ENCODE measurements at regions of chr11 and their contacts with region 1.

Region 1: GRCh38 chr11:65711785-65712632 is at the start of gene KAT5:
- DNase-seq: peak; percentile 94
- ATAC-seq: peak; percentile 89
- H3K4me3 ChIP-seq: peak within 1 kb of the TSS; percentile 85
- H3K27ac ChIP-seq: peak within 1 kb of the TSS; percentile 99
- H3K4me1 ChIP-seq: peaks cover 8% of the 10 kb centered on the region
- H3K27me3 ChIP-seq: no peaks in the 10 kb centered on the region
- CTCF ChIP-seq: peak; percentile 99 to 100 (median 100); a peak in 5 of 6 replicates
- EP300 ChIP-seq: peak in 1 of 2 experiments; percentile 16; a peak in 1 of 4 replicates
- POLR2A ChIP-seq: peak; percentile 92
- RAD21 ChIP-seq: peak; percentile 90
- polyA plus RNA-seq, gene KAT5: 3.4 to 10.2 TPM

Region 2: GRCh38 chr11:65625628-65626342 is 86.2 kb before region 1 on chr11:
- CTCF ChIA-PET with region 1: interaction called, 26 read pairs
- POLR2A ChIA-PET with region 1: no interaction called
- RAD21 ChIA-PET with region 1: interaction called, 7 read pairs
- SMC1A ChIA-PET with region 1: interaction called, 5 read pairs
- in situ Hi-C with region 1: no loop called
- intact Hi-C with region 1: loop called (anchors 5 kb)
- DNase-seq: no peak
- ATAC-seq: peak; percentile 96
- H3K4me3 ChIP-seq: no peak overlapping the region
- H3K27ac ChIP-seq: no peak overlapping the region
- H3K4me1 ChIP-seq: no peaks in the 10 kb centered on the region
- H3K27me3 ChIP-seq: no peaks in the 10 kb centered on the region
- CTCF ChIP-seq: peak; percentile 60 to 87 (median 85)
- EP300 ChIP-seq: no peak
- POLR2A ChIP-seq: no peak
- RAD21 ChIP-seq: peak; percentile 39

Region 3: DNA sequence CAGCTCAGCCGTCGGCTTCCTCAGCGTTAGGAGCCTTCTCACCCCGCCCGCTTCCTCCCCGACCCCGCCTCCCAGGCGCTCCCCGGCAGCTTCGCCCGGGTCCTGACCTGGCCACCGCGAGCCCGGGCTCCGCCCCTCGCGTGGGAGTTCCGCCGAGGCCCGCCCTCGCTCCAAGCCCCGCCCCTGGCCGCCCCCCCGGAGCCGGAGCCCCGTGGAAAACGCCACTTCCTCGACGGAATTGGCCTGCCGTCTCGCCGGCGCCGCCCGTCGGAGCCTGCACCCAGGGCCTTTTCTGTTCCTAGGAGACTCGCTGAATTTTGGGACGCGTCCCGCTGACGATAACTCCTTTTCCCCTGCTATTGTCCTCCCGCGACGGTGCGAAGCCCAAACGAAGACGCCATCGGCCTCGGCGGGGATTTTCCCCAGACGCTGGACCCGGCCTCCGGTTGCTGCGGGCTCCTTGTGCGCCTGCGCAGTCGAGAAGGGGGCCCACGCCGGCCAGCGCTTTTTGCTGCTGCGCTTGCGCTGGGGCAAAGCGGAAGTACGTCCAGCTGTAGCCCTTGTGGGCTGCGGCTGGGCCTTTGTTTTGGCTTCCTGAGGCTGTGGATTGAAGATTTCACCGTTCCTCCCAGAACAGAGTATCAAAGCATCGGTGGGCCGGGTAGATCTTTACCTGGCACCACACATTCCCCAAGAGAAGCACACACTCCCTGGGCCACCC is 59.3 kb before region 1 on chr11:
- CTCF ChIA-PET with region 1: no interaction called
- POLR2A ChIA-PET with region 1: no interaction called
- RAD21 ChIA-PET with region 1: no interaction called
- SMC1A ChIA-PET with region 1: no interaction called
- in situ Hi-C with region 1: no loop called
- intact Hi-C with region 1: no loop called
- DNase-seq: peak; percentile 80
- ATAC-seq: peak; percentile 90
- H3K4me3 ChIP-seq: peak overlapping the region; percentile 51; the same call in 1 of the 2 replicates
- H3K27ac ChIP-seq: peak overlapping the region; percentile 90
- H3K4me1 ChIP-seq: peaks cover 16% of the 10 kb centered on the region
- H3K27me3 ChIP-seq: no peaks in the 10 kb centered on the region
- CTCF ChIP-seq: 0 out of 6 replicates have a peak, but pooled peaks of 1 of the 3 experiments have one; percentile 11
- EP300 ChIP-seq: no peak
- POLR2A ChIP-seq: peak; percentile 88
- RAD21 ChIP-seq: no peak

Region 4: DNA sequence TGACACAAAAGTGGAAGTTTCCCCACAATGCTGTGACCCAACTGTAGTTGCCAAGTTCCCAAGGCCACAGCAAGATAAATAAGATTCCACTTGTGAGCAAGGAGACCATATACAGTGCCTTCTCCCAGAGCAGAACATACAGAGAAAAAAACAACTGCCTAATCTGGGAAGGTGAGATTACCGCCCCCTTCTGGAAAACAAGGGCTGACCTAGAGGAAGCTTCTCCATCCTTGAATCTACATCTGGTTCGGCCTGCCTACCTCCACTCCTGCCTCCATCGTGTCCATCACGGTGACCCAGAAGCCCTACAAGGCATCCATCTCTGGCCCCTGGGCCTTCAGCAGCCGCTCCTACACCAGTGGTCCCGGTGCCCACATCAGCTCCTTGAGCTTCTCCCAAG is 14.7 kb after region 1 on chr11:
- CTCF ChIA-PET with region 1: interaction called, 16 read pairs
- POLR2A ChIA-PET with region 1: interaction called, 13 read pairs
- RAD21 ChIA-PET with region 1: interaction called, 12 read pairs
- SMC1A ChIA-PET with region 1: interaction called, 5 read pairs
- in situ Hi-C with region 1: no loop called
- intact Hi-C with region 1: no loop called
- DNase-seq: no peak
- ATAC-seq: peak; percentile 26; the same call in 1 of the 3 replicates
- H3K4me3 ChIP-seq: no peak overlapping the region
- H3K27ac ChIP-seq: no peak overlapping the region
- H3K4me1 ChIP-seq: no peaks in the 10 kb centered on the region
- H3K27me3 ChIP-seq: no peaks in the 10 kb centered on the region; a peak in 1 of 4 replicates
- CTCF ChIP-seq: peak; percentile 7 to 25 (median 21); a peak in 2 of 6 replicates
- EP300 ChIP-seq: no peak
- POLR2A ChIP-seq: no peak
- RAD21 ChIP-seq: no peak

Region 5: GRCh38 chr11:65817835-65818742 is 106.1 kb after region 1 on chr11:
- CTCF ChIA-PET with region 1: interaction called, 41 read pairs
- POLR2A ChIA-PET with region 1: interaction called, 6 read pairs
- RAD21 ChIA-PET with region 1: interaction called, 42 read pairs
- SMC1A ChIA-PET with region 1: interaction called, 32 read pairs
- in situ Hi-C with region 1: loop called (anchors 5 kb)
- intact Hi-C with region 1: loop called (anchors 2 kb)
- DNase-seq: no peak
- ATAC-seq: peak; percentile 94
- H3K4me3 ChIP-seq: peak overlapping the region; percentile 65
- H3K27ac ChIP-seq: no peak overlapping the region
- H3K4me1 ChIP-seq: peaks cover 3% of the 10 kb centered on the region; the same call in 1 of the 2 replicates
- H3K27me3 ChIP-seq: no peaks in the 10 kb centered on the region
- CTCF ChIP-seq: peak; percentile 97 to 99 (median 98)
- EP300 ChIP-seq: 0 out of 4 replicates have a peak, but pooled peaks of 1 of the 2 experiments have one; percentile 30
- POLR2A ChIP-seq: no peak
- RAD21 ChIP-seq: peak; percentile 87

Region 6: GRCh38 chr11:65859200-65859811 is 147.3 kb after region 1 on chr11:
- CTCF ChIA-PET with region 1: interaction called, 14 read pairs
- POLR2A ChIA-PET with region 1: interaction called, 9 read pairs
- RAD21 ChIA-PET with region 1: interaction called, 4 read pairs
- SMC1A ChIA-PET with region 1: interaction called, 7 read pairs
- in situ Hi-C with region 1: no loop called
- intact Hi-C with region 1: no loop called
- DNase-seq: peak; percentile 90
- ATAC-seq: peak; percentile 78
- H3K4me3 ChIP-seq: peak overlapping the region; percentile 85
- H3K27ac ChIP-seq: peak overlapping the region; percentile 100
- H3K4me1 ChIP-seq: peaks cover 25% of the 10 kb centered on the region
- H3K27me3 ChIP-seq: no peaks in the 10 kb centered on the region
- CTCF ChIP-seq: no peak
- EP300 ChIP-seq: no peak
- POLR2A ChIP-seq: peak; percentile 87
- RAD21 ChIP-seq: no peak

Measured in GM12878 (cell line).